Heart left ventricle (tissue), 16 donors: ENCODE measurements at regions of chr5 and their contacts with region 1.

Region 1: DNA sequence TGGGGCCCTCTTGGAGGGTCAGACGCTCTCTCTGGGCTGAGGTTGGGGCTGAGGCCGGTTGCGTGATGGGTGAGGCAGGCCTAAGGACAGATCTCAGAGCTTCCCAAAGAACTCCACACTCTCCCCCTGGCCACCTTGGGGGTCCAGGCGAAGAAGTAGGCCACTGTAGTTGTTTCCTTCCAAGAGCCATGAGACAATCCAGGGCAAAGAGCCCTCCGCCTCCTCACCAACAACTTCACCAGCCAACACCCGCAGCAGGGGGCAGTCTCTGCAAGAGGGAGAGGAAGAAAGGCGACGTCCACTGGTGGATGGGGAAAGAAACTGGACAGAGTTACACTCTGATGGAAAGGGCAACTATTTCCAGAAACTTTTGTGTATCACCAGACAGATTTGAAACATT is 10.7 kb downstream of the SLC35A4 start:
- DNase-seq: peak in 3 of 5 donors; percentile 45 to 73 (median 61)
- ATAC-seq: peak in 3 of 4 donors; percentile 41 to 72 (median 55)
- H3K4me3 ChIP-seq: no peak overlapping the region
- H3K27ac ChIP-seq: peak overlapping the region in 2 of 12 donors; percentile 1 to 88
- H3K4me1 ChIP-seq: peaks cover 1 to 49% (median 18%) of the 10 kb centered on the region in 12 donors
- H3K27me3 ChIP-seq: no peaks in the 10 kb centered on the region
- CTCF ChIP-seq: peak in 8 of 12 donors; percentile 20 to 46 (median 36)
- POLR2A ChIP-seq: no peak

Region 2: GRCh38 chr5:140372971-140373487 is 202.3 kb before region 1 on chr5:
- intact Hi-C with region 1: no loop called
- DNase-seq: peak; percentile 75 to 79 (median 78)
- ATAC-seq: peak; percentile 39 to 90 (median 86)
- H3K4me3 ChIP-seq: no peak overlapping the region
- H3K27ac ChIP-seq: peak overlapping the region in 1 of 12 donors; percentile 3
- H3K4me1 ChIP-seq: peaks cover 0 to 9% (median 8%) of the 10 kb centered on the region in 12 donors
- H3K27me3 ChIP-seq: no peaks in the 10 kb centered on the region
- CTCF ChIP-seq: peak; percentile 69 to 90 (median 79)
- POLR2A ChIP-seq: no peak

Region 3: GRCh38 chr5:140622301-140622700 is 47.0 kb after region 1 on chr5:
- intact Hi-C with region 1: loop called in 1 of 10 experiments (anchors 5 kb)
- DNase-seq: no peak
- ATAC-seq: no peak
- H3K4me3 ChIP-seq: no peak overlapping the region
- H3K27ac ChIP-seq: peak overlapping the region in 1 of 12 donors; percentile 30
- H3K4me1 ChIP-seq: peaks cover 0 to 11% (median 0%) of the 10 kb centered on the region in 12 donors
- H3K27me3 ChIP-seq: no peaks in the 10 kb centered on the region
- CTCF ChIP-seq: no peak
- POLR2A ChIP-seq: no peak

Region 4: DNA sequence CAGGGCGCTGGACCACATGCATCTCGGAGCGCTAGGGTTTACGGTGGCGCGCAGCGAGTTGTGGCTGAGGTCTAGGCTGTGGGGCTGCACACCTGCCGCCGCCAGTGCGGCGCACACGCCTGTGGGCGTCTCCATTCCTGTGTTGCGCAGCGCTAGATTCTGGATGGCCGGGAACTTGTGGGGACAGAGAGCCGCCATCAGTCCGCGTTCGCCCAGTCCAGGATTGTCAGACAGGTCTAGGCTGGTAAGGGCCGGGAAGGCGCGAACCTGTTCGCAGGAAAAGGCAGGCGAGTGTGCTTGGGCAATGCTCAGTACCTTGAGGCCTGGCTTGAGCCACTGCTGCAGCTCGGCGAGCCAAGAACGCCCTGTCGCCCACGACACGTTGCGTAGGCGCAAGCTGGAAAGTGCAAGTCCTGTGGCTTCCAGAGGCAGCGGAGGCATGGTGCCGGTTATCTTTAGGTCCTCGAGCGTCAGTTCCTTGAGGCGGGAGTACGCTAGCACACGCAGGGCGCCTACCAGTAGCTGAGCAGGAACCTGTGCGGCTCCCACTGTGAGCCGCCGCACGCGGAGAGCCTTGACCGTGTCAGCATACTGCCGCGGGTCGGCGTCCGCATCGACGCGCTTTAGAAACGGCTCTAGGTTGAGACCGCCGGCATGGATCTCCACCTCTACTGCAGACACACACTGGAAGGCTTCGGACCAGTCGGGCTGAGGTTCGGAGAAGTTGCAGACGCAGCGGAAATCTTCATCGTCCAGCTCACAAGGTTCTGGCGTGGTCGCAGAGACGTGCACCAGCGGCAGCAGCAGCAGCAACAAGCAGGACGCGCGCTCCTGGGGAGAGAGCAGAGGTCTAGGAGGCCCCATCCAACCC is 57.1 kb after region 1 on chr5:
- intact Hi-C with region 1: loop called in 1 of 10 experiments (anchors 2 kb)
- DNase-seq: peak; percentile 52 to 85 (median 71)
- ATAC-seq: peak; percentile 60 to 82 (median 77)
- H3K4me3 ChIP-seq: peak overlapping the region; percentile 32 to 67 (median 57)
- H3K27ac ChIP-seq: peak overlapping the region in 11 of 12 donors; percentile 50 to 95 (median 71)
- H3K4me1 ChIP-seq: peaks cover 0 to 39% (median 16%) of the 10 kb centered on the region in 12 donors
- H3K27me3 ChIP-seq: no peaks in the 10 kb centered on the region
- CTCF ChIP-seq: no peak
- POLR2A ChIP-seq: peak in 1 of 2 donors; percentile 15